Posterior cingulate gyrus (tissue), 11 donors: ENCODE measurements at regions of chr1 and their contacts with region 1.

Region 1: GRCh38 chr1:94335950-94336349 is 82.2 kb upstream of the ABCD3 start:
- DNase-seq: peak in 8 of 10 donors; percentile 43 to 89 (median 66)

Region 2: DNA sequence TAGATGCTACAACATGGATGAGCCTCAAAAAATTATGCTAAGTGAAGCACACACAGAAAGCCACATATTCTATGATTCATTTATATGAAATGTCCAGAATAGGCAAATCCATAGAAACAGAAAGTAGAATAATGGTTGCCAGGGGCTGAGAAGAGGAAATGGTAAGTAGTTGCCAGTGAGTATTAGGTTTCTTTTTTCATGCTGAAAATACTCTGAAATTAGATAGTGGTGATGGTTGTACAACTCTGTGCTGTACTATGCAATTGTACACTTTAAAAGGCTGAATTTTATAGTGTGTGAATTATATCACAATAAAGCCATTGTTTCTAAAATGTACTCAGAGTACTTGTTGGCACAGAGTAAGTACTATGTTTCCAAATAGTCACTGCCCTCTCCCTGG is 1833.7 kb before region 1 on chr1:
- intact Hi-C with region 1: no loop called
- DNase-seq: no peak

Region 3: DNA sequence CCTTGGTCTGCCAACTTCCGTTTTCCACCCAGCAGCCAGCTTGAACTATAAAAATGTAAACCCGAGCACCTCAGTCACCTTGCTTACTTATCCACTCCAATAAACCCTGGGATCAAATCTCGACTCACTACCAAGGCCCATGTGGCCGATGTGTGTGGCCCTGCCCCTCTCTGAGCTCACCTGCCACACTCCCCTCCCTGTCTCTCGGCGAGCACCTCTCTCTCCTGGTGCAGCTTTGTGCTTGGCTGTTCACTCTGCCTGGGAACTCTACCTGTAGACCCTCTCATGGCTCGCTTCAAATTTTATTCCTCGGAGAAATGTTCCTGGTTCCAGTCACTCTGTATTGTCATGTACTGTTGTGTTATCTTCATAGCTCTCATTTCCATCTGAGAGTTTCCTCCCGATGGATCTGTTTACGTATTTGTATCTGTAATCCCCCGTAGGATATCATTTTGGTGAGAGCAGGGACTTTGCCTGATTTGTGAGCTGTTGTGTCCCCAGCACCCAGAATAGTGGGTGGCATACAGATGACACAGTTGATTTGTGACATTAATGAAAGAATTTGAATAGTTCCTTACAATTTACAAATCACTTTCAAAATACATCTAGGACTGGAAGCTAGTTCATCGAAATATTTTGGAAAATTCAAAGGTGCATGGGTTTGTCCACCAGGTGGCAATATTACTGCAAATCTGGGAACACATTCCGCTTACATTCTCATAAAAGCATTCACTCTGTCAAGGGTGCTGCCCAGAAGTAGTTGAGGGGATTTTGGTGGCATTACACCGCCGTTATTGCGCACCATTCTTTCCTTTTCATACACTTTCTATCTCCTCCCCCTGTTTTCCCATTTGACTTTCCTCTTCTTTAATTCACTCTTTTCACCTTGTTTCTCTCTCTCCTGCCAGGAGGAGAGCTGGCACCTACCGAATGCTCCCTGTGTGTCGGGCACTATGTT is 310.3 kb before region 1 on chr1:
- intact Hi-C with region 1: loop called (anchors 1 kb)
- DNase-seq: peak in 1 of 10 donors; percentile 26

Region 4: DNA sequence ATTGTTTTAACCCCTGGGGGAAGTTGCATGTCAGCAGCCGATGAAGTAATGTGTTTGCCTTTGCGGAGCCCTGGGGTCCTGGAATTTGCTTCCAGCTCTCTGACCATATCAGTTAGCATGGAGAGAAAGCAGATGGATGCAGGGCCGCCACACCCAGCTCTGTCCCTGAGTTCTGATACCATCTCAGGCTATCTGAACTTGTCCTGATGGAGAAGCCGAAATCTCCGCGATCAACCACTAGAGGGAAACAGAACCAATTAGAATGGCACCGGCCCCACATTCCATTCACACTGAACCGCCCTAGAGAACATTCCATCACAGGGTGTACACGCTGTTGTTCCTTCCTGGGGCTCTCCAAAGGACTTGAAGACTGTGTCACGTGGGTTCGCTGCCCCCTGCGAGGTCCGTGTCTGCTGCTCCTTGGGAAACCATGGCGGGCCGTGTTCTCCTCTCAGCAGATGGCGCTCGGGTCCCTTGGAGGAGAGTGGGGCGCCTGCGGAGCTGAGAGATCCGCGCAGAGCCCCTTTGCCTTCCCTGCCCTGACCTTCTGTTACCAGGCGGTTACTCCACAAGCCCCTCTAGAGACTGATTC is 290.4 kb before region 1 on chr1:
- intact Hi-C with region 1: loop called (anchors 1 kb)
- DNase-seq: peak; percentile 27 to 92 (median 52)

Region 5: GRCh38 chr1:94061513-94062443 is 274.2 kb before region 1 on chr1:
- intact Hi-C with region 1: loop called (anchors 1 kb)
- DNase-seq: peak in 7 of 10 donors; percentile 45 to 89 (median 62)

Region 6: DNA sequence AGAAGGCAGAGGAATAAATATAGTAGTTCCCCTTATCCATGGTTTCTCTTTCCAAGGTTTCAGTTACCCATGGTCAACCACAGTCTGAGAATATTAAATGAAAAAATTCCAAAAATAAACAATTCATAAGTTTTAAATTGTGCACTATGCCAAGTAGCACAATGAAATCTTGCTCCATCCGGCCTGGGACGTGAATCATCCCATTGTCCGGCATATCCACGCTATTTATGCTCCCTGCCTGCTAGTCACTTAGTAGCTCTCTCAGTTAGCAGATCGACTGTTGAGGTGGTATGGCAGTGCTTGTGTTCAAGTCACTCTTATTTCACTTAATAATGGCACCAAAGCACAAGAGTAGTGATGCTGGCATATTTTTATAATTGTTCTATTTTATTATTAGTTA is 39.9 kb before region 1 on chr1:
- intact Hi-C with region 1: no loop called
- DNase-seq: no peak